A673 (cell line): ENCODE measurements at regions of chr14 and their contacts with region 1.

Region 1: GRCh38 chr14:77097700-77098528 is at the start of gene CIPC:
- DNase-seq: peak; percentile 99
- H3K4me3 ChIP-seq: peak within 1 kb of the TSS; percentile 84
- H3K27ac ChIP-seq: peak within 1 kb of the TSS; percentile 91
- H3K4me1 ChIP-seq: peaks cover 17% of the 10 kb centered on the region
- H3K27me3 ChIP-seq: no peaks in the 10 kb centered on the region
- CTCF ChIP-seq: no peak
- total RNA-seq, gene CIPC: 24.8 and 31.1 TPM in 2 replicates

Region 2: DNA sequence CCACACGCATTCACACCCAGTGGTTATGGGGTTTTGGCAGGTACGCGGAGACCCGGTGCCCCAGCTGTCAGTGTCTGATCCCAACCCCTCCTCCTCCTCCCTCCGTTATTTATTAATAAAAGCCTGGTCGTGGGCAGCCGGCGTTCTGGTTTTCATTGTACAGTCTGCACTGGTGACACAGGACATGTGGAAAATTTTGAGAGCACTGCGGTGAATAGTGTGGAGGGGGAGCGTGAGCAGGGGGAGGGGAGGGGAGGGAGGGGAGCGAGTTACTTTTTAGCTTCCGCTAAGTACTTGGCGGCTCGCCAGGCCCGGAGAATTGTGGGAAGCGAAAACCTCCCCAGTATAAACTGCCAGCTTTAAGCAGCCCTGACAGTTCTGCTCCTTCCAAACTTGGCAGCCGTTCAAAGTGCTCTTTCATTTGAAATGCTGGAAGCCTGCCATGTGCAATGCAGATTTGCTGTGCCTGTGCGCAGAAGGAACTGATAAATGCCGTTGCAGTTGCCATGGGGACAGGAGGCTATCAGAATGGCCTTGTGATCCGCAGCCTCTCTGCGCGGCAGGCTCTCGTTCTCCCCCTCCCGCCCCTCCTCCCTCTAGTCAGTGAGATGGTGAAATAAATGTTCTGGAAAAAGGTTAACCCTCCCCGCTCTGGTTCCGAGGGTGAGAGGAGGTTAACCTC is 57.7 kb before region 1 on chr14:
- CTCF ChIA-PET with region 1: interaction called, 12 read pairs
- POLR2A ChIA-PET with region 1: no interaction called
- intact Hi-C with region 1: no loop called
- DNase-seq: peak; percentile 100
- H3K4me3 ChIP-seq: peak overlapping the region; percentile 25
- H3K27ac ChIP-seq: peak overlapping the region; percentile 92
- H3K4me1 ChIP-seq: peaks cover 85% of the 10 kb centered on the region
- H3K27me3 ChIP-seq: no peaks in the 10 kb centered on the region
- CTCF ChIP-seq: no peak

Region 3: GRCh38 chr14:77067632-77068514 is 30.0 kb before region 1 on chr14:
- CTCF ChIA-PET with region 1: interaction called, 5 read pairs
- POLR2A ChIA-PET with region 1: no interaction called
- intact Hi-C with region 1: loop called (anchors 1 kb)
- DNase-seq: peak; percentile 77
- H3K4me3 ChIP-seq: no peak overlapping the region
- H3K27ac ChIP-seq: no peak overlapping the region
- H3K4me1 ChIP-seq: no peaks in the 10 kb centered on the region
- H3K27me3 ChIP-seq: no peaks in the 10 kb centered on the region
- CTCF ChIP-seq: peak; percentile 98